Dorsolateral prefrontal cortex (tissue), 120 donors: ENCODE measurements at regions of chr9 and their contacts with region 1.

Region 1: GRCh38 chr9:120683146-120683545 is 31.1 kb downstream of the MEGF9 start:
- DNase-seq: no peak
- H3K4me3 ChIP-seq: no peak overlapping the region
- H3K27ac ChIP-seq: peak overlapping the region in 27 of 59 donors; percentile 0 to 87 (median 58)
- H3K27me3 ChIP-seq: no peaks in the 10 kb centered on the region
- CTCF ChIP-seq: no peak

Region 2: GRCh38 chr9:120636194-120636957 is 46.8 kb before region 1 on chr9:
- intact Hi-C with region 1: loop called in 1 of 2 experiments (anchors 5 kb)
- DNase-seq: no peak
- H3K4me3 ChIP-seq: no peak overlapping the region
- H3K27ac ChIP-seq: no peak overlapping the region
- H3K27me3 ChIP-seq: no peaks in the 10 kb centered on the region
- CTCF ChIP-seq: no peak

Region 3: DNA sequence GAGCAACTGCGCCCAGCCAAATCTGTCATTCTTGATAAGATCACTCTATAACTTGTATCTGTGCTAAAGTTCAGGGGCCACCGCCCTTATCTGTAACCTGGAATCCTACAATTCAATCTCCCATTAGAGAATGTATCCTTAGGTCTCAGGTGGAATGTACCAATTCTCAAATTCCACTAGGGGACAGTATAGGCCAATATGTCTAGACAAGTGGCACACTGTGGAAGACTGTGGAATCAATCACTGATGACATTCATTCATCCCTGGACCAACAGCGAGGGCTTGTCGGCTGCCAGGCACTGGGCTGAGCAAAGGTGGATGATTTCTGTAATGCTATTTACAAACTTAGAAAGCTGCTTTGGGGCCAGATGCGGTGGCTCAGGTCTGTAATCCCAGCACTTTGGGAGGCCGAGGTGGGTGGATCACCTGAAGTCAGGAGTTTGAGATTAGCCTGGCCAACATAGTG is 59.8 kb after region 1 on chr9:
- intact Hi-C with region 1: no loop called
- DNase-seq: no peak
- H3K4me3 ChIP-seq: no peak overlapping the region
- H3K27ac ChIP-seq: no peak overlapping the region
- H3K27me3 ChIP-seq: no peaks in the 10 kb centered on the region
- CTCF ChIP-seq: peak in 53 of 56 donors; percentile 11 to 62 (median 46)